ENCODE measurements at regions of chrX and their contacts with region 1.

Region 1: DNA sequence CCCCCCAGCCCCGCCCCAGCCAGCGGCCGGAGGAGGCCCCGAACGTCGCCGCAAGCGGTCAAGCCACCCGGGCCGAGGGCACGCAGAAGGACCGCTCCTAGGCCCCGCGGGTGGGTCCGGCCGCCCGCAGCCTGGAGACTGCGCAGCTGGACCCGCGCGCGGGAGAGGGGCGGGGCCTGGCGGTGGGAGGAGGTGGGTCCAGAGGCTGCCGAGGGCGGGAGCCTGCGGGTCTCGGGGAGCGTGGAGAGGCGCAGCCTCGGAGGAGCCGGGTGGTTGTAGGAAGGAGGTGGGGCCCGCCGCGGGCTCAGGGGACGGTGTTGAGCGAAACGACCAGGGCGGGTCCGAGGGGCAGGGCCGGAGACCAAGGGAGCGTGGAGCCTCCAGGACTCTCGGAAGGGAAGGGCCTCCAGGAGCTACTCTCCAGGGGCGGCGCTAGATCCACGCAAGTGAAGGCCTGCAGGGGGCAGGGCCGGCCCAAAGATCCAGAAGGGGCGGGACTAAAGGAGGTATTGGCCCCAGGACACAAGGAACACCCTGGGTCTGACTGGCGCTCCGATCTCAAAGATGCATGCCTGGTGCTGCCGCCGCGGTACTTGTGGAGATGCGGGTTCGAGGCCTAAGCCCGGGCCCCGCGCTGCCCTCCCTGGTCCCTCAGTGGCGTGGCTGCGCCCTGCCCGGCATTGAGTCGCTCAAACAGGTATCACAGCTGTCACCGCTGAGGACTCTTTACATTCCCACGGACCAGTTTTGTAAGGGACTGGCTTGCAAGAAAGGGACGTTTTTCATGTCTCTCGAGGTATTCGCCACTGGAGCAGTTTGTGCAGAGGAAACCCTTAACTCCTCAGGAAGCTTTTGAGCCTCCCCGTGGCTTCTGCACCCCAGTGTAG is 5.9 kb downstream of the TIMM17B start:
- DNase-seq: peak; percentile 82
- ATAC-seq: peak; percentile 91
- H3K4me3 Mint-ChIP-seq: peak overlapping the region; percentile 78
- H3K27ac Mint-ChIP-seq: peak overlapping the region; percentile 52
- H3K4me1 Mint-ChIP-seq: peaks cover 27% of the 10 kb centered on the region
- H3K27me3 Mint-ChIP-seq: no peaks in the 10 kb centered on the region

Region 2: DNA sequence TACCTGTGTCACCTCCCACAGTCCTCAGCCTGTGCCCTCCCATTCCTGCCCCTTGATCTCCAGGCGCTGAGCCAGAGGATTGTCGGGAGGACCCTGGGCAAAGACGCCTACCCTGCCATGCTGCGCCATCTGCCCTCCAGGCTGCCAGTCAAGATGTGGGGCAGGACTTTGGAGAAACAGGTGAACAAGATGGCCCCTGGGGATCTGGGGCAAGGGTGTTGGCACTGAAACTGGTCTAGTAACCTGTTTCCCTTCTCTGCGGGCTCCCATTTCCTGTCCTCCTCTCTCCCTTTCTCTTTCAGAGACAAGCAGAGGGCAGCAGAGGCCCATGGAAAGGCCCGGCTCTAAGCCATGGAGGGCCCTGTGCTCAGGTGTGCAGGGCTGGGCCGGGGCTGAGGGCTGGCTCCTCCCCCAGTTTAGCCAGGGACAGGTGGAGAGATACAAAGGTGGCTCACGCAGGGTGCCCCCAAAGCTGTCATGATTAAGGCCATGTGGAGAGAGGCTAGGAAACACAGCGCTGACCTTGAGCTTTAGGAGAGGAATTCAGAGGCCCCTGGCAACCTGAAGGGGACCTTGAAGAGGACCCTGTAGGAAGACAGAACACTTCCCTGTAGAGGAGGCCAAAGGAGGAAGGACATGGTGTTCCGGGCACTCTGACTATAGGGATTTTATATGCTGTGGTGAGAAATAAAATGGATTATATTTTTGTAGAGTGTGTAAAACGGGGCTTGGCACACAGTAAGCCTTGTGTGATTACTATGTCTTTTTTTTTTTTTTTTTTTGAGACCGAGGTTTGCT is 129.8 kb before region 1 on chrX and contains the start of gene GLOD5:
- CTCF ChIA-PET with region 1: no interaction called
- POLR2A ChIA-PET with region 1: no interaction called
- DNase-seq: peak; percentile 48
- ATAC-seq: peak; percentile 70
- H3K4me3 Mint-ChIP-seq: no peak within 1 kb of the TSS
- H3K27ac Mint-ChIP-seq: peak within 1 kb of the TSS; percentile 74
- H3K4me1 Mint-ChIP-seq: peaks cover 9% of the 10 kb centered on the region
- H3K27me3 Mint-ChIP-seq: peaks cover 2% of the 10 kb centered on the region
- total RNA-seq, gene GLOD5: not detected

Region 3: GRCh38 chrX:48945516-48946348 is 54.1 kb after region 1 on chrX:
- CTCF ChIA-PET with region 1: interaction called, 11 read pairs
- POLR2A ChIA-PET with region 1: interaction called, 3 read pairs
- DNase-seq: peak; percentile 61
- ATAC-seq: peak; percentile 58
- H3K4me3 Mint-ChIP-seq: no peak overlapping the region
- H3K27ac Mint-ChIP-seq: peak overlapping the region; percentile 55
- H3K4me1 Mint-ChIP-seq: peaks cover 56% of the 10 kb centered on the region
- H3K27me3 Mint-ChIP-seq: no peaks in the 10 kb centered on the region